Ovary (tissue), 10 donors: ENCODE measurements at regions of chr7 and their contacts with region 1.

Region 1: DNA sequence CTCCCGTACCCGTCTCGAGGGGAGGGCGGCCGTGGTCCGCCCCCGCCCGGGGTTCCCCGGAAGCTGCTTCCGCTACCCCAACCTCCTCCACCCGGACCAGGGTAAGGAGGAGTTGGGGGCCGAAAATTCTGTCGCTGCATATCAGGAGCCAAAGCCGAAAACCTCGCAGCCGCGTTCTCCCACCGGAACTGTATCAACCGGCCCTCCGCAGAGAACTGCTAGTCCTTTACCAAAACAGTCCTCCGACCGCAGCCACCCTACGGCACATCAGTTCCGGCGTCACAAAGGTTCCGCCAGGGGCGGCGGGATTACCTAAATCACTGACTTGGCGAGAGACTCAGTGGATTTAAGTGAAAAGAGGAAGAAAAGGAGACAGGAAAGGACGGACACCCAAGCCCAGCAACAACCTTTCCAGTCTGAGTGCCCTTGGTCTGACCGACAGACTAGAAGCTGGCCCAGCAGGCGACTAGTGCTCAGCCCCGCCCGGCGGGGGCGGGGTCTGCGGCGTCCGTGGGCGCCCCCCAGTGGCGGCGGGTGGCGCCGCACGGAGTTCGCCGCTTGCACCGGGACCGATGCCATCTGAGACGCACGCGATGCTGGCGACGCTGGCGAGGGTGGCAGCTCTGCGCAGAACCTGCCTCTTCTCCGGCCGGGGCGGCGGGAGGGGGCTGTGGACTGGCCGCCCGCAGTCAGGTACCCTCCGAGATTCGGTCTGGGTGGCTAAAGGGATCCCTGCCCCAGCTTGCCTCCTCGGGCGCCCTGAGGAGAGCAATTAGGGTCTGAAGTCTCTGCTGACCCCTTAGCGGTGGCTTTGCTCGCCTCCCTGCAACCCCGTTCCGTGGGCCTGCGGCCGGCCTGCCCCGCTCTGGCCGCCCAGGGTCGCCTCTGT is at the starts of genes MPLKIP and SUGCT:
- DNase-seq: peak; percentile 80 to 90 (median 86)
- H3K4me3 ChIP-seq: peak within 1 kb of the TSS; percentile 76
- H3K27ac ChIP-seq: peak within 1 kb of the TSS; percentile 59 to 83
- H3K4me1 ChIP-seq: peaks cover 1% of the 10 kb centered on the region
- H3K27me3 ChIP-seq: no peaks in the 10 kb centered on the region
- CTCF ChIP-seq: peak; percentile 89 to 100 (median 94)
- EP300 ChIP-seq: no peak
- POLR2A ChIP-seq: no peak
- total RNA-seq, gene MPLKIP: 27.3 to 55.3 (median 31.7) TPM
- total RNA-seq, gene SUGCT: 3.4 to 9.3 (median 7.8) TPM

Region 2: DNA sequence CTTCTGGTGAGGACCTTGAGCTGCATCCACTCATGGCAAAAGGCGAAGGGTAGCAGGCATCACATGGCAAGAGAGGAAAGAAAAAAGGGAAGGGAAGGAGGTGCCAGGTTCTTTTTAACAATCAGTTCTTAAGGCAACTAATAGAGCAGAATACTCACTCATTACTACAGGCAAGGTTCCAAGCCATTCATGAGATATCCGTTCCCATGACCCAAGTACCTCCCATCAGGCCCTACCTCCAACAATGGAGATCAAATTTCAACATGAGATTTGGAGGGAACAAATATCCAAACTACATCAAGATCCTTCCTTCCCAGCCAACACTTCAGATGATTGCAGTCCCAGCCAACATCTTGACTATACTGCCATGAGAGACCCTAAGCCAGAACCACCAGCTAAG is 607.4 kb before region 1 on chr7:
- intact Hi-C with region 1: no loop called
- DNase-seq: no peak
- H3K4me3 ChIP-seq: no peak overlapping the region
- H3K27ac ChIP-seq: no peak overlapping the region
- H3K4me1 ChIP-seq: no peaks in the 10 kb centered on the region
- H3K27me3 ChIP-seq: no peaks in the 10 kb centered on the region
- CTCF ChIP-seq: no peak
- EP300 ChIP-seq: no peak
- POLR2A ChIP-seq: no peak

Region 3: GRCh38 chr7:39949980-39950472 is 184.6 kb before region 1 on chr7 and contains the start of gene CDK13:
- intact Hi-C with region 1: loop called in 1 of 4 experiments (anchors 1 kb)
- DNase-seq: peak; percentile 78 to 91 (median 84)
- H3K4me3 ChIP-seq: peak within 1 kb of the TSS; percentile 92
- H3K27ac ChIP-seq: peak within 1 kb of the TSS; percentile 80 to 99
- H3K4me1 ChIP-seq: peaks cover 5% of the 10 kb centered on the region
- H3K27me3 ChIP-seq: no peaks in the 10 kb centered on the region
- CTCF ChIP-seq: no peak
- EP300 ChIP-seq: no peak
- POLR2A ChIP-seq: no peak
- total RNA-seq, gene CDK13: 62.7 to 124 (median 81.3) TPM

Region 4: GRCh38 chr7:41809940-41810576 is 1675.4 kb after region 1 on chr7:
- intact Hi-C with region 1: loop called in 1 of 4 experiments (anchors 5 kb)
- DNase-seq: no peak
- H3K4me3 ChIP-seq: no peak overlapping the region
- H3K27ac ChIP-seq: no peak overlapping the region
- H3K4me1 ChIP-seq: no peaks in the 10 kb centered on the region
- H3K27me3 ChIP-seq: no peaks in the 10 kb centered on the region
- CTCF ChIP-seq: no peak
- EP300 ChIP-seq: no peak
- POLR2A ChIP-seq: no peak